ENCODE measurements at regions of chr2 and their contacts with region 1.

Region 1: DNA sequence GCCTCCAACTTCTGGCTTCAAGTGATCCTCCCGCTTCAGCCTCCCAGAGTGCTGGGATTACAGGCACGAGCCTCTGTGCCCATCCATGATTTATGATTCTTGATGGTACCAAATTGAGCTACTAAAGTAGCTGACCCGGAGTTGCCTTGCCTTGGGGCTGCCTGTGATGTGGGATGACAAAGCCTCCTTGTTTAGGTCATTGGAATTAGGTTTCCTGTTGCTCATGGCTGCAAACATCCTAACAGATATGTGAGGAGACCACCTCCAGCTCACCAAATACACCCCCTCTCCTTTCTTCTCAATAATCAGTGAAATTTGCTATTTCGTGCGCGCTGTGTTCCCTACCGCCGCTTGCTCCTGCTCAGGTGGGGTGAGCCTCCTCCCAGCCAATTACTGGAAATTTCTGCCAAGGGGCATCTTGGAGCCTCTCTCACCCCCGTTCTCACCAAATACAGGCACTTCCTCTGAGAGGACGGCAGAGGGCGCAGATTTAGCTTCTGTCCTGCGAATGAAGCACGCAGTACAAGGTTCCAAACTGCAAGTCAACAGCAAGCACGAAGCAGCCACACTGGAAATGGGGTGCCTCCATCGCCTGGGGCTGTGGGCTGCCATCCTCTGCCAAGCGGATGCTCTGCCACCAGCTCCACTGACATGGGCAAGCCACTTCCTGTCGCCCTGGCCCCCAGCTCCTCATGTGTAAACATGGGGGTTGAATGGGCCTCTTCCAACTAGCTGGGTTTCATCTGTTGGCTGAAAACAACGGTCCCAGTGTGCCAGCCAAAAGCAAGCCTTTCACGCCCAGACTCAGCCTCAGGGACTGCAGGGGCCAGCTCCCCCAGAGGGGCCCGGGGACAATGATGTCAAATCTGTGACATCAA is 71.7 kb downstream of the NCAPH start:
- DNase-seq: peak; percentile 26
- ATAC-seq: peak; percentile 95
- H3K4me3 ChIP-seq: no peak overlapping the region
- H3K27ac ChIP-seq: no peak overlapping the region
- H3K4me1 ChIP-seq: peaks cover 6% of the 10 kb centered on the region
- H3K27me3 ChIP-seq: no peaks in the 10 kb centered on the region
- CTCF ChIP-seq: peak; percentile 86 to 90 (median 87)
- EP300 ChIP-seq: no peak
- POLR2A ChIP-seq: no peak
- RAD21 ChIP-seq: peak; percentile 84

Region 2: DNA sequence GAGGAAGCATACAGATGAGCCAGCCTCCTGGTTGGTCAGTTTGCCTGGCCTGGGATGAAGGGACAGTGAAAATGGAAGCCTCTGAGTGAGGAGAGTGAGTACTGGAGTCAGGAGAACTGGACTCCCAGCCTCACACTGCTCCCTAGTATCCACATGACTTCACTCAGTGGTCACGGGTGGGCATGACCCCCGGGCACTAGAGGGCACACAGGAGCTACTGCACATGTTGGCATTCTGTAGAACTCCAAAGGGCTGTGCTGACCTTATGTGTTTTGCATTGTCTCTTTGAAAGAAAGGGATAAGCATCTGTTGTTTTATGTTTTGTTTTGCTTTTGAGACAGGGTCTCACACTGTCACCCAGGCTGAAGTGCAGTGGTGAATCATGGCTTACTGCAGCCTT is 48.0 kb before region 1 on chr2:
- CTCF ChIA-PET with region 1: interaction called, 24 read pairs
- POLR2A ChIA-PET with region 1: no interaction called
- RAD21 ChIA-PET with region 1: no interaction called
- SMC1A ChIA-PET with region 1: no interaction called
- in situ Hi-C with region 1: no loop called
- intact Hi-C with region 1: no loop called
- DNase-seq: no peak
- ATAC-seq: peak; percentile 67
- H3K4me3 ChIP-seq: no peak overlapping the region
- H3K27ac ChIP-seq: no peak overlapping the region
- H3K4me1 ChIP-seq: no peaks in the 10 kb centered on the region
- H3K27me3 ChIP-seq: no peaks in the 10 kb centered on the region
- CTCF ChIP-seq: peak; percentile 33 to 40 (median 38); a peak in 4 of 6 replicates
- EP300 ChIP-seq: no peak
- POLR2A ChIP-seq: no peak
- RAD21 ChIP-seq: peak; percentile 33; the same call in 1 of the 2 replicates

Region 3: GRCh38 chr2:96477458-96477857 is 70.2 kb after region 1 on chr2:
- CTCF ChIA-PET with region 1: interaction called, 16 read pairs
- POLR2A ChIA-PET with region 1: no interaction called
- RAD21 ChIA-PET with region 1: interaction called, 3 read pairs
- SMC1A ChIA-PET with region 1: interaction called, 9 read pairs
- in situ Hi-C with region 1: no loop called
- intact Hi-C with region 1: no loop called
- DNase-seq: no peak
- ATAC-seq: no peak
- H3K4me3 ChIP-seq: no peak overlapping the region
- H3K27ac ChIP-seq: no peak overlapping the region
- H3K4me1 ChIP-seq: no peaks in the 10 kb centered on the region
- H3K27me3 ChIP-seq: no peaks in the 10 kb centered on the region
- CTCF ChIP-seq: no peak
- EP300 ChIP-seq: no peak
- POLR2A ChIP-seq: no peak
- RAD21 ChIP-seq: no peak

Region 4: DNA sequence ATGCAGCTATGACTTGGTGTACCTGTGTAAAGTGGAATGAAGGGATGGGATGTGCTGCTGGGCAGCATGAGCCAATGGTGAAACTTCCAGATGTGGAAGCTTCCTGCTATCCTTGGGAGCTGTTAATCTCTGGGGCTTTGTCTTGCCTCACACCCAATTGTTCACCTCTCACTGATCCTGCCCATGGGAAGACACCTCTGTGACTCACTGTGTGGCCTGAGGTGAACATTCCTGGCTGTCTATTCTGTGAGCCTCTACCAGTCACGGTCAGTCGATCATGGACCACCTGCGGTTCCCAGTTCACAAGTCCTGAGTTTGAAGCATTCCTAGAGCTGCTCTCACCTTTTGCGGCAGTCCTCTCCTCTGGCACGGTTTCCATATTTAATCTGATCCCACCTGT is 85.8 kb after region 1 on chr2:
- CTCF ChIA-PET with region 1: interaction called, 11 read pairs
- POLR2A ChIA-PET with region 1: interaction called, 5 read pairs
- RAD21 ChIA-PET with region 1: interaction called, 5 read pairs
- SMC1A ChIA-PET with region 1: interaction called, 4 read pairs
- in situ Hi-C with region 1: no loop called
- intact Hi-C with region 1: no loop called
- DNase-seq: no peak
- ATAC-seq: no peak
- H3K4me3 ChIP-seq: no peak overlapping the region
- H3K27ac ChIP-seq: no peak overlapping the region
- H3K4me1 ChIP-seq: peaks cover 11% of the 10 kb centered on the region; the same call in 1 of the 2 replicates
- H3K27me3 ChIP-seq: no peaks in the 10 kb centered on the region
- CTCF ChIP-seq: no peak
- EP300 ChIP-seq: no peak
- POLR2A ChIP-seq: no peak
- RAD21 ChIP-seq: no peak

Region 5: GRCh38 chr2:96554293-96555145 is 147.2 kb after region 1 on chr2:
- CTCF ChIA-PET with region 1: interaction called, 32 read pairs
- POLR2A ChIA-PET with region 1: no interaction called
- RAD21 ChIA-PET with region 1: interaction called, 18 read pairs
- SMC1A ChIA-PET with region 1: interaction called, 12 read pairs
- in situ Hi-C with region 1: no loop called
- intact Hi-C with region 1: loop called (anchors 2 kb)
- DNase-seq: no peak
- ATAC-seq: peak; percentile 79
- H3K4me3 ChIP-seq: no peak overlapping the region
- H3K27ac ChIP-seq: no peak overlapping the region
- H3K4me1 ChIP-seq: no peaks in the 10 kb centered on the region
- H3K27me3 ChIP-seq: no peaks in the 10 kb centered on the region
- CTCF ChIP-seq: peak; percentile 88 to 95 (median 91); a peak in 5 of 6 replicates
- EP300 ChIP-seq: no peak
- POLR2A ChIP-seq: peak; percentile 64
- RAD21 ChIP-seq: peak; percentile 77